Activated CD4-positive, alpha-beta T cell treated with anti-CD3 and anti-CD28 coated beads, Interleukin-2, amount 10 ng/mL, durations not matched to agents 24 days and 14 days (primary cell): ENCODE measurements at regions of chr1 and their contacts with region 1.

Region 1: DNA sequence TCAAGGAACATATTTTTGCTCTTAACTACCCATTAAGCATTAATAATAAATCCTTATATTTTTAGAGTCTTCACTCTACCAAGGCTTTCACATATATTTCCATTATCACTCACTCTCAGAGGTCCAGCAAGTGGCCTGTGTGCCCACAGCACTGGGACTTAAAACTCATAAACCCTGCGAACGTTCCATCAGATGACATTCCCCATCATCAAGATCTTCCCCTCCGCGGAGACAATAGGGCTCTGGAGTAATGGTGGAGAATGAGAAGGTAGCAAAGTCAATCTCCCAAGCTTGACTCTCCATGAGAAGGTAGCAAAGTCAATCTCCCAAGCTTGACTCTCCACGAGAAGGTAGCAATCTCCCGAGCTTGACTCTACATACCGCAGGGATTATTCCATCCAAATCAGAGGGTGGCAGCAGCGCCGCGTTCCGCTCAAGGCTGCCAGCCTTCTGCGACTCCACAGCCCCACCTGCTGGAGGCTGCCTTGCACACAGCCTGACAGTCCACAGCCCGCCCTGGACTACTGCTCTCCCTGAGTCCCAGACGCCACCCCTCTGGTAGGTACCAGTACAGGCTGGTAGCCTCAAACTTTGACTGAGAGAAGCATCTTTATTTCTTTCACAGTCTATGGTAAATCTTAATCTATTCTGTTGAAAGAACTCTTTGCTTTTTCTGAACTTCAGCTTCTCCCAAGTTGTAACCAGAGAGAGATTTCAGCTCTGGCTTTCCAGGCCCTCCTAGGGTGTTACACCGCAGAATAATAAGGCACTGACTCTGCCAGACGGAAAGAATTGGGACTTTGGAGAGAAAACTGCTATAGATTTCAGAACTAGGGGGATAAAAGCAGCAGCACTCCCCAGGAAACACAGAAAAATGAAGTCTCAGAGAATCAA is 26.4 kb upstream of the CTTNBP2NL start:
- DNase-seq: peak; percentile 95
- H3K4me3 Mint-ChIP-seq: no peak overlapping the region
- H3K27ac Mint-ChIP-seq: no peak overlapping the region
- H3K4me1 Mint-ChIP-seq: peaks cover 3% of the 10 kb centered on the region
- H3K27me3 Mint-ChIP-seq: peaks cover 43% of the 10 kb centered on the region

Region 2: GRCh38 chr1:112177314-112177713 is 192.3 kb before region 1 on chr1:
- intact Hi-C with region 1: no loop called
- DNase-seq: no peak
- H3K4me3 Mint-ChIP-seq: no peak overlapping the region
- H3K27ac Mint-ChIP-seq: no peak overlapping the region
- H3K4me1 Mint-ChIP-seq: no peaks in the 10 kb centered on the region
- H3K27me3 Mint-ChIP-seq: no peaks in the 10 kb centered on the region

Region 3: GRCh38 chr1:112209488-112209887 is 160.2 kb before region 1 on chr1:
- intact Hi-C with region 1: no loop called
- DNase-seq: no peak
- H3K4me3 Mint-ChIP-seq: no peak overlapping the region
- H3K27ac Mint-ChIP-seq: no peak overlapping the region
- H3K4me1 Mint-ChIP-seq: no peaks in the 10 kb centered on the region
- H3K27me3 Mint-ChIP-seq: peaks cover 6% of the 10 kb centered on the region

Region 4: DNA sequence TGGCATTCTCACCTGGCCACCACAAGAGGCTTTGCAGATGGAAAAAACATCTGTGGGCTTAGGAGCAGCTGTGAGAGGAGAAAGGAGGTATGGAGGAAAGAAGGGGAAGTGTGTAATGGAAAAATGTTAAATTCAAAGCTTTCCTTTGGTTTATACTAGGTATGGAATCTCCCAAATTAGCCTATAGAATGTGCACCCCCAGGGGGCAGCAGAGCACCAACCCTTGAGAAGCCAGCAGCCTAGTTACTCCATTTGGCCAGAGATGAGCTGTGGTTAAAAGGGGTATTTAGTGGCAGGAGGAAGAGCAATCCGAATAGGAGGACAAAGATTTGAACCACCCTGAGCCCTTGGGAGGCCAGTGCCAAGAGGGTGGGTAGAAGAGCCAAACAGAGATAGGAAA is 71.1 kb before region 1 on chr1:
- intact Hi-C with region 1: loop called (anchors 2 kb)
- DNase-seq: peak; percentile 77
- H3K4me3 Mint-ChIP-seq: no peak overlapping the region
- H3K27ac Mint-ChIP-seq: no peak overlapping the region
- H3K4me1 Mint-ChIP-seq: no peaks in the 10 kb centered on the region
- H3K27me3 Mint-ChIP-seq: peaks cover 4% of the 10 kb centered on the region